Transverse colon (tissue), 4 donors: ENCODE measurements at regions of chr7 and their contacts with region 1.

Region 1: GRCh38 chr7:95723592-95724180 is 48.7 kb upstream of the DYNC1I1 start:
- DNase-seq: no peak
- H3K4me3 ChIP-seq: no peak overlapping the region
- H3K27ac ChIP-seq: no peak overlapping the region
- H3K4me1 ChIP-seq: no peaks in the 10 kb centered on the region
- H3K27me3 ChIP-seq: peaks cover 5% of the 10 kb centered on the region
- CTCF ChIP-seq: peak in 4 of 5 experiments; percentile 10 to 30 (median 24)
- EP300 ChIP-seq: no peak
- POLR2A ChIP-seq: no peak

Region 2: DNA sequence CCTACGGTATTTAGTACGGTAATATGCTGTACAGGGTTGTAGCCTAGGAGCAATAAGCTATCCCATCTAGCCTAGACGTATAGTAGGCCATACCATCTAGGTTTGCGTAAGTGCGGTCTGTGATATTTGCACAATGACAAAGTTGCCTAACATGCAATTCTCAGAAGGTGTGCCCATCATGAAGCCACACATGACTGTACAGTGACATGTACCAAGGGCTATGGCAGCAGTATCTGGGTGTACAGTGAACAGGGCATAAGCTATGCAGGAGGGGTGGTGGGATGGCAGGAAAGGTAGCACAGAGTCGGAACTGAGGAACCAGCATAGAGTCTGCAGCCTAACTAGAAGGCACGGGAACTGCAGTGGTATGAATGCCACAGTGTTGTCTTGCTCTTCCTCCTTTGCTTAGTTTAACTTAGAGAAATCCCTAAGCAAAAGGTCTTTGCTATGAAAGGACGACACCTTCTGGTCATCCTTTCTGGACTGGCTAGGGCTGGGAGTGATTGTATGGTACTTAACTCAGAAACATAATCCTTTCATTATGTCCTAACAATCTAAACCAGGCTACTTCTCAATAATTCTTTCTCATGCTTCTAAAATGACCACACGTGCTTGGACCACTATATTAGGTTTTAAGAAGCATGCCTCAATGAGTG is 142.2 kb after region 1 on chr7:
- in situ Hi-C with region 1: loop called in 2 of 4 experiments (anchors 10 kb)
- intact Hi-C with region 1: loop called (anchors 2 kb)
- DNase-seq: no peak
- H3K4me3 ChIP-seq: no peak overlapping the region
- H3K27ac ChIP-seq: no peak overlapping the region
- H3K4me1 ChIP-seq: no peaks in the 10 kb centered on the region
- H3K27me3 ChIP-seq: no peaks in the 10 kb centered on the region
- CTCF ChIP-seq: no peak
- EP300 ChIP-seq: no peak
- POLR2A ChIP-seq: no peak

Region 3: DNA sequence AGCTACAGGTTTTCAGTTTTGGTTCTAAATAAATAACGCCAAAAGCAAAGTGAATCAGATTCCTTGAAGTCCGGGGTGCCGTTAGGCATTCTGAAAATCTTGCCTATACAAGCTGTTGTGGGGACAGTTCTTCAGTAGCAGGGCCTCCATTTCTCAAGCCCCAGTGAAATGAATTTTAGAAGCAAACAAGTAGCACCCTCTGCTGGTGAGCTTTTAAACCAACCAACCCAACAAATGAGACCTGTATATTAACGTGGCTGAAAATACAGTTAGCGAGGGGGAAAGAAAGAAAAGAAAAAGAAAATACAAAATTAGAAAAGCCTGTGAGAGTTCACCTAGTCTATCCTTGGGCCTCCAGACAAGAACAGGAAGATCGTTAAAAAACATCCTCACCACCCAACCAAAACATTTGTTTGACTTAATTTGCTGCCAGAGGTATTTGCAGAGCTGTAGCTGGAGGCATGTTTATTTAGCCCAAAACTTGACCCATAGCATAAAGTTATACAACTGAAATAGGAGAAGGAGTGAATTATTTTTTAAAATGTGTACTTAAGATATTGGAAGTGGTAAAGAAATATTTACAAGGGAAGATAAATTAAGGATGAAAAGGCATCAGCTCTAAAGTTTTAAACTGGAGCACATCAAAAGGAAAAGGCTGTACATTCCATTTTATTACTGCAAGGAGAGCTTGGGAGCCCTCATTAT is 147.5 kb after region 1 on chr7:
- in situ Hi-C with region 1: loop called in 2 of 4 experiments (anchors 10 kb)
- intact Hi-C with region 1: loop called (anchors 2 kb)
- DNase-seq: no peak
- H3K4me3 ChIP-seq: no peak overlapping the region
- H3K27ac ChIP-seq: no peak overlapping the region
- H3K4me1 ChIP-seq: peaks cover 0 to 3% (median 0%) of the 10 kb centered on the region in 4 donors
- H3K27me3 ChIP-seq: no peaks in the 10 kb centered on the region
- CTCF ChIP-seq: peak; percentile 39 to 52 (median 48)
- EP300 ChIP-seq: no peak
- POLR2A ChIP-seq: no peak